ENCODE measurements at regions of chr3 and their contacts with region 1.

Region 1: DNA sequence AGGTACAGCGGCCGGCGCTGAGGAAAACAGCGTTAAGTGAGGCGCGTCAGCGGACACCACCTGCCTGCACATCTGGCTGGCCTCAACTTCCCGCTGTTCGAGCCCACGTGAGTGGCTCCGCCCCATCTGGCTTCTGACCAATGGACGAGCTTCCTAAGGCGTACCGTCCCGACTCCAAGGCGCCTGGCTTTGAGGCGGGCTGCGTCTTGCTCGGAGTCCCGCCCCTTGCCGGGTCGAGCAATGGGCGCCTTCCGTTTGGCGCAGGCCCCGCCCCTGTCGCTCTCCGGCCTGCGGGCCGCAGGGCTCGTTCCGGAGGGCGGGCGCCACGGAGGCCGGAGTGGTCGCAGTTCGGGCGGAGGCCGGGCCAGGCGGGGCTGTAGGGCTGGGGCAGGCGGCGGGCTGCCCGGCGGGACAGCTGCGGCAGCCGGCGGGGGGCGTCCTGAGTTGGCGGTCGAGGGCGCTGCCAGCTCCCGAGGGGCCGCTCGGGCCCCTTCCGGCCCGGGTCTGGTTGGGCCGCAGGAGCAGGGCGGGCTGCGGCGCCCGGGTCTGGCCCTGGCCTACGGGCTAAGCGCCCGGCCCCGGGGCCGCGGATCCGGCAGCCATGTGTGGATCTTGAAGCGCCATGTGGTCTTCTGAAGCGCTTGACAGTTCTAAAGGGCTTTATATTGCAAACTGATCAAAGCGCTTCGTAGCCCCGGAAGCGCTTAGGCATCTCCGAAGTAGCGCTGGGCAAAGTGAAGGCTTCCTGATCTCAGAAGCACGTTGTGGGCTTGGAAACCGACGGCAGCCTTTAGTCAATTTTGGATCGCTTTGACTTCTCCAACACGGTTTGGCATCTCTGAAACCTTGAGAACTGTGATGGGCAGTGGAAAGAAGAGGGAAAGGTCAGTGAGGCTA is at the start of gene TATDN2:
- DNase-seq: peak; percentile 98
- ATAC-seq: peak; percentile 98
- H3K4me3 ChIP-seq: peak within 1 kb of the TSS; percentile 65 to 84
- H3K27ac ChIP-seq: peak within 1 kb of the TSS; percentile 76
- H3K4me1 ChIP-seq: peaks cover 6 to 20% of the 10 kb centered on the region in 2 experiments; a peak in 3 of 4 replicates
- H3K27me3 ChIP-seq: no peaks in the 10 kb centered on the region
- CTCF ChIP-seq: no peak
- POLR2A ChIP-seq: peak; percentile 58
- RAD21 ChIP-seq: no peak
- total RNA-seq, gene TATDN2: 26.8 TPM

Region 2: GRCh38 chr3:9192248-9193025 is 1056.0 kb before region 1 on chr3:
- CTCF ChIA-PET with region 1: no interaction called
- POLR2A ChIA-PET with region 1: no interaction called
- RAD21 ChIA-PET with region 1: no interaction called
- intact Hi-C with region 1: no loop called
- DNase-seq: no peak
- ATAC-seq: no peak
- H3K4me3 ChIP-seq: no peak overlapping the region
- H3K27ac ChIP-seq: no peak overlapping the region
- H3K4me1 ChIP-seq: peaks cover 0 to 4% of the 10 kb centered on the region in 2 experiments; a peak in 2 of 4 replicates
- H3K27me3 ChIP-seq: peaks cover 13% of the 10 kb centered on the region; the same call in 1 of the 2 replicates
- CTCF ChIP-seq: no peak
- POLR2A ChIP-seq: no peak
- RAD21 ChIP-seq: no peak

Region 3: GRCh38 chr3:10263646-10264363 is 15.4 kb after region 1 on chr3:
- CTCF ChIA-PET with region 1: interaction called, 14 read pairs
- POLR2A ChIA-PET with region 1: interaction called, 5 read pairs
- RAD21 ChIA-PET with region 1: no interaction called
- intact Hi-C with region 1: no loop called
- DNase-seq: peak; percentile 22
- ATAC-seq: peak; percentile 99
- H3K4me3 ChIP-seq: no peak overlapping the region
- H3K27ac ChIP-seq: peak overlapping the region; percentile 41
- H3K4me1 ChIP-seq: peaks cover 7 to 9% of the 10 kb centered on the region in 2 experiments
- H3K27me3 ChIP-seq: no peaks in the 10 kb centered on the region
- CTCF ChIP-seq: peak in 2 of 3 experiments; percentile 53 to 54; a peak in 4 of 6 replicates
- POLR2A ChIP-seq: no peak
- RAD21 ChIP-seq: peak; percentile 36

Region 4: GRCh38 chr3:10551821-10552630 is 303.6 kb after region 1 on chr3:
- CTCF ChIA-PET with region 1: no interaction called
- POLR2A ChIA-PET with region 1: no interaction called
- RAD21 ChIA-PET with region 1: no interaction called
- intact Hi-C with region 1: no loop called
- DNase-seq: peak; percentile 15
- ATAC-seq: peak; percentile 90
- H3K4me3 ChIP-seq: peak overlapping the region in 1 of 2 experiments; percentile 43; a peak in 3 of 4 replicates
- H3K27ac ChIP-seq: no peak overlapping the region
- H3K4me1 ChIP-seq: peaks cover 14 to 35% of the 10 kb centered on the region in 2 experiments; a peak in 3 of 4 replicates
- H3K27me3 ChIP-seq: no peaks in the 10 kb centered on the region; the same call in 1 of the 2 replicates
- CTCF ChIP-seq: no peak
- POLR2A ChIP-seq: no peak
- RAD21 ChIP-seq: no peak